ENCODE measurements at regions of chr15 and their contacts with region 1.

Region 1: DNA sequence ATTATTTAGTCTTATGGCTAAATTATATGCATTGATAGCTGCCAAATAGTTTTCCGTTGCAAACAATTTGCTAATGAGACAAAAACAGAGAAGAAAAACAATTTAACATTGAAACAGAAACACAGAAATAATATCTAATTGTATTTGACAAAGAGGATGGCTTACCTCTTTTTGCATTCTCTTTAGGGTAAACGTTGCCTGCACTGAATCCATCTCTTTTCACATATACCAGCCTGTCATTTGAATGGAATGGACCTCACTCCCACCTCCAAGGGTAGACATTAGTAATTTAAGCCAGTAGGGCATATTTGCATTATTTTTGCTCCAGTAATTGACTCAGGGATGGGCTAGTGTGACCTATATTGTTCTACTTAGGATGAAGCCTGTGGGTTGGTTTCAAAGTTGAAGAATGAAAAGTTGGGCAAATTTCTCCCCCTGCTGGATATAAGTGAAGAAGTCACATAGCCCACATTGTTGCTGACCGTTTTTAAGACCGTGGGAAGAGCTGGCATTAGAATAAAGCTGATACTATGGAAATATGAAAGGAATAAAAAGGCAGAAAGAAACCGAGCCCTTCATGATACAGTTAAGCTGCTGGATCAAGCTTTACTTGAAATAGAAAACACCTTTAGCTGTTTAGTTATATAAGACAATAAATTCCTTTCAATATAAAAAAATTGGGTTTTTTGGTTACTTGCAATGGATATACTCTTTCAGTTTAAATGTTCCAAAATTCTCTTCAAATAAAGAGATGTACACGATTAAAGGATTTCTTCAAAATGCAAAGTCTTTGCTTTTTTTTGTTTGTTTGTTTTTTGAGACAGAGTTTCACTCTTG is 26.9 kb downstream of the PIERCE2 start:
- DNase-seq: peak; percentile 56
- CTCF ChIP-seq: peak; percentile 48

Region 2: DNA sequence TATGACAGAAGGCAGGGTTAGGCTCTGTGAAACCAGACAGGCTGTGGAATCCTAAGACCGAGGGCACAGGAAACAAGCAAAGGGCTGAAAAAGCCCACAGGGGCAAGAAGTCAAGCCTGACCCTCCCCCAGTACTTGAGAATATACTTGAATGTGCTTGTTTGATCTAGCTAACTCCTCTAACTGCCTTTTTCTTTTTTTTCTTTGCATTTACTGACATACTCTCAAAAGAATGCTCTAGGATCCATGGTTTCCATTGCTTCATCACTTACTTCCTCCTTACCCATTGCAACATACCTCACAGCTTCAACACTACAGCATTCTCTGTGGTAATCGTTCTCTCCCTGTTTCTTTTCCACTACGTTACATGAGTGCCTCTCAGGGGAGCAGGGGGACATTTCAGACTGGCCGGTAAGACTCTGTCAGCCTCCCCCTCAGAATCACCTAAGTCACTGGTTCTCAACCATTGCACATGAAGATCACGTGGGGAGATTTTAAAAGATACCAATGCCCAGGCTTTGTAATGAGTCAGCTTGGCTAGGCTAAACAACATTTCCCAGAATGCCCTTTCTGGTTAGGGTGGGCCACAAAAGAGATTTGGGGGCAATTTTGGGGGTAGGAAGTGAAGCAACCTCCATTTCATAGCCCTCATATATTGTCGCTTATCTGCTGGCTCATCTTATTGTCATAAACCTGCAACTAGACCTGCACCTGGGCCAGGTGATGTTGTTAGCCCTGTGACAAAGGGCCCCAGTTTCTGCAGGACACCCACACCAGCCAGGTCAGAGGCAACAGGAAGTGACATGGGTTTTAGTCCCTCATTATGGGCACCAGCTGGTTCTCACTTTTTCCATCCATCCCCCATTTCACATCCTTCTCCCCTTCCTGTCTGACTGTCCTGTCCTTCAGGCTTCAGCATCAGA is 213.9 kb before region 1 on chr15:
- CTCF ChIA-PET with region 1: interaction called, 20 read pairs
- POLR2A ChIA-PET with region 1: no interaction called
- DNase-seq: peak; percentile 45
- CTCF ChIP-seq: no peak

Region 3: GRCh38 chr15:55407949-55408791 is 27.0 kb before region 1 on chr15 and contains the starts of genes CCPG1 and PIERCE2:
- CTCF ChIA-PET with region 1: interaction called, 22 read pairs
- POLR2A ChIA-PET with region 1: no interaction called
- DNase-seq: peak; percentile 94
- CTCF ChIP-seq: peak; percentile 42

Region 4: DNA sequence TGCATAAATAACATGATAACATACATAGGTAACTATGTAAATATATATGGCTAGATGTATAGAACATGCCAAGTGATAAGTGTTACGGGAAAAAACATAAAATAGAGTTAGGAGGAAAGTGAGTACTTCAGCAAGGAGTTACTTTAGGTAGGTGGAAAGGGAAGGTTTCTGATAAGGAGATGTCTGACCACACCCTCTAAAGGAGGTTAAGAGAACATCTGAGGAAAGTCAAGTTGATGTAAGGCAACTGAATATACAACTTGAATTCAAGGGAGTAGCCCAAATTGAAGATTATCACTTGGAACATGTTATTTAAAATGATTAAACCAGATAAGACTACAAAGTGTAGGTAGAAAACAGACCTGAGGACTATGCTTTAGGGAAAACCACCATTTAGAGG is 13.1 kb before region 1 on chr15:
- CTCF ChIA-PET with region 1: interaction called, 12 read pairs
- POLR2A ChIA-PET with region 1: no interaction called
- DNase-seq: no peak
- CTCF ChIP-seq: no peak

Region 5: GRCh38 chr15:55457401-55458022 is 22.3 kb after region 1 on chr15:
- CTCF ChIA-PET with region 1: interaction called, 10 read pairs
- POLR2A ChIA-PET with region 1: no interaction called
- DNase-seq: no peak
- CTCF ChIP-seq: no peak

Measured in GM10248 (cell line).